ENCODE measurements at regions of chr13 and their contacts with region 1.

Region 1: GRCh38 chr13:24727731-24728601 is 36.0 kb upstream of the RNF17 start:
- DNase-seq: peak; percentile 81
- H3K4me3 Mint-ChIP-seq: no peak overlapping the region
- H3K27ac Mint-ChIP-seq: no peak overlapping the region
- H3K4me1 Mint-ChIP-seq: peaks cover 13% of the 10 kb centered on the region
- H3K27me3 Mint-ChIP-seq: peaks cover 13% of the 10 kb centered on the region

Region 2: GRCh38 chr13:24693862-24694471 is 34.0 kb before region 1 on chr13:
- CTCF ChIA-PET with region 1: interaction called, 14 read pairs
- POLR2A ChIA-PET with region 1: no interaction called
- DNase-seq: peak; percentile 57
- H3K4me3 Mint-ChIP-seq: peak overlapping the region; percentile 4
- H3K27ac Mint-ChIP-seq: no peak overlapping the region
- H3K4me1 Mint-ChIP-seq: peaks cover 12% of the 10 kb centered on the region
- H3K27me3 Mint-ChIP-seq: peaks cover 35% of the 10 kb centered on the region

Region 3: GRCh38 chr13:24709186-24709913 is 18.6 kb before region 1 on chr13:
- CTCF ChIA-PET with region 1: interaction called, 16 read pairs
- POLR2A ChIA-PET with region 1: no interaction called
- DNase-seq: peak; percentile 81
- H3K4me3 Mint-ChIP-seq: no peak overlapping the region
- H3K27ac Mint-ChIP-seq: peak overlapping the region; percentile 78
- H3K4me1 Mint-ChIP-seq: peaks cover 30% of the 10 kb centered on the region
- H3K27me3 Mint-ChIP-seq: peaks cover 5% of the 10 kb centered on the region

Measured in activated CD4-positive, alpha-beta T cell treated with anti-CD3 and anti-CD28 coated beads, Interleukin-2, amount 10 ng/mL, durations not matched to agents 7 days and 5 days (primary cell).